ENCODE measurements at regions of chr3 and their contacts with region 1.

Region 1: DNA sequence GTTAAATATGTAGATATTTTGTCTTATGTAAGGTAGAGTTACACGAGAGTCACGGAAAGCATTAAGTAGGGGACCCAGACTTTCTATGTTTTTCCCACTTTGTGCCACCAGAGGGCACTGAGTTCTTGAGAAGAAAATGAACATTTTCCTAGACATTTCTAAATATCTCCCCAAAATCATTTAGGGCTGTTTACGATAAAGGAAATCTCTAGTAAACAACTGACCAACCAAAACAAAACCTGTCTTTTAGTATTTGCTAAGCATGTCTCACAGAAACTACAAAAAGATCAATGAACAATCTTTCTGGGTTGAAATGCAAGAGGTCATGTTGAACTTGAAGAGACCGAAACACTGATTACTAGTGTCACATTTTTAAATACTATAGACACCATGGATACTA is 16.1 kb downstream of the POU1F1 start:
- DNase-seq: peak in 6 of 9 experiments; percentile 14 to 59 (median 43)
- ATAC-seq: peak; percentile 66
- H3K4me3 ChIP-seq: no peak overlapping the region
- H3K4me3 Mint-ChIP-seq: no peak overlapping the region
- H3K27ac ChIP-seq: no peak overlapping the region
- H3K27ac Mint-ChIP-seq: no peak overlapping the region
- H3K4me1 ChIP-seq: no peaks in the 10 kb centered on the region
- H3K4me1 Mint-ChIP-seq: peaks cover 2% of the 10 kb centered on the region
- H3K27me3 ChIP-seq: no peaks in the 10 kb centered on the region
- H3K27me3 Mint-ChIP-seq: no peaks in the 10 kb centered on the region
- CTCF ChIP-seq: peak; percentile 61

Region 2: DNA sequence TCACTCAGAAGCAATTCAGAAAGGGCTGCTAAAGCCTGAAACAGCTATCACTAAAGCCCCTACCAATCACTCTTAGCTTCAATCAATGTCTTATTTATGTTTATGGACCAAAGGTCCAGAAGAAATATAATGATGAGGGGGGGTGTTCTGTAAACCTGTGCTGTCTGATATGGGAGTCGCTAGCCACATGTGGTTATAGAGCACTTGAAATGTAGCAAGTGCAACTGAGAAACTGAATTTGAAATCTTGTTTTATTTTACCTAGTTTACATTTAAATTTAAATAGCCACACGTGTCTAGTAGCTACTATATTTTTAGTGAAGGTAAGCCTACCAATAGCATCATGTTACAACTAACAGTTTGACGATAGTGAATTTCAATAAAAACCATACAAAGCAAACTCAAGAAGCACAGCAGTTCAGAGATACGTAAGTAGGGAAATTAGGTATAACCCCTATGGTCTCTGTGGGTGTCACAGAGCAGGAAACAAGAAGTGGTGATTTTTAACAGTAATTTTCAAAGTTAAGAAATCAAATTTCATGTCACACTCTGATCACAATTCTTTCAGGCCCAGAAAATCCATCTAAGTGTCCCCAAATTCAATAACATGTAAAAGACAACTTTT is 12.6 kb after region 1 on chr3:
- CTCF ChIA-PET with region 1: interaction called, 21 read pairs
- POLR2A ChIA-PET with region 1: no interaction called
- intact Hi-C with region 1: no loop called
- DNase-seq: no peak
- ATAC-seq: no peak
- H3K4me3 ChIP-seq: no peak overlapping the region
- H3K4me3 Mint-ChIP-seq: no peak overlapping the region
- H3K27ac ChIP-seq: no peak overlapping the region
- H3K27ac Mint-ChIP-seq: no peak overlapping the region
- H3K4me1 ChIP-seq: peaks cover 7% of the 10 kb centered on the region
- H3K4me1 Mint-ChIP-seq: peaks cover 14% of the 10 kb centered on the region
- H3K27me3 ChIP-seq: no peaks in the 10 kb centered on the region
- H3K27me3 Mint-ChIP-seq: no peaks in the 10 kb centered on the region
- CTCF ChIP-seq: no peak

Region 3: DNA sequence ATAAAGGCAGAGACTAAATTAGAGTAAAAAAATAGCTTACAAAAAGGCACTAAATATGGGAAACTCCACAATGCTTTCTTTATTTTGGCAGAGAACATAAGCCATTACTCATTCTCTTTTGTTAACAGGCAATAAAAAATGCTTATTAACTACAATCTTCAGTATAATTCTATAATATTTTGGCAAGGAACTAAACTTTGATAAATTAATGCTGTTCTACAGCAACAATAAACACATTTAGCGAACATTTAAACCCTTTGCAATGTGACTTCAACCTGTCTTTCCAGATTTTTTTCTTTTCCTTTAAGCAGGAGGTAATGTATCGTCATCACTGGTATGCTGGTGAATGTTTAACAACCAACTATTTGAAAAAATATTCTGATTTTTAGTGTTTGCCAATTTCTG is 58.3 kb after region 1 on chr3:
- CTCF ChIA-PET with region 1: no interaction called
- POLR2A ChIA-PET with region 1: no interaction called
- intact Hi-C with region 1: no loop called
- DNase-seq: no peak
- ATAC-seq: no peak
- H3K4me3 ChIP-seq: no peak overlapping the region
- H3K4me3 Mint-ChIP-seq: no peak overlapping the region
- H3K27ac ChIP-seq: no peak overlapping the region
- H3K27ac Mint-ChIP-seq: no peak overlapping the region
- H3K4me1 ChIP-seq: no peaks in the 10 kb centered on the region
- H3K4me1 Mint-ChIP-seq: no peaks in the 10 kb centered on the region
- H3K27me3 ChIP-seq: no peaks in the 10 kb centered on the region
- H3K27me3 Mint-ChIP-seq: peaks cover 18% of the 10 kb centered on the region
- CTCF ChIP-seq: no peak